ENCODE measurements at regions of chr10 and their contacts with region 1.

Region 1: GRCh38 chr10:86399879-86400704 is 33.5 kb upstream of the GRID1 start:
- DNase-seq: peak; percentile 87
- ATAC-seq: peak; percentile 87
- H3K4me3 Mint-ChIP-seq: peak overlapping the region; percentile 87
- H3K27ac Mint-ChIP-seq: peak overlapping the region; percentile 69
- H3K4me1 Mint-ChIP-seq: peaks cover 13% of the 10 kb centered on the region
- H3K27me3 Mint-ChIP-seq: peaks cover 5% of the 10 kb centered on the region
- CTCF ChIP-seq: no peak

Region 2: DNA sequence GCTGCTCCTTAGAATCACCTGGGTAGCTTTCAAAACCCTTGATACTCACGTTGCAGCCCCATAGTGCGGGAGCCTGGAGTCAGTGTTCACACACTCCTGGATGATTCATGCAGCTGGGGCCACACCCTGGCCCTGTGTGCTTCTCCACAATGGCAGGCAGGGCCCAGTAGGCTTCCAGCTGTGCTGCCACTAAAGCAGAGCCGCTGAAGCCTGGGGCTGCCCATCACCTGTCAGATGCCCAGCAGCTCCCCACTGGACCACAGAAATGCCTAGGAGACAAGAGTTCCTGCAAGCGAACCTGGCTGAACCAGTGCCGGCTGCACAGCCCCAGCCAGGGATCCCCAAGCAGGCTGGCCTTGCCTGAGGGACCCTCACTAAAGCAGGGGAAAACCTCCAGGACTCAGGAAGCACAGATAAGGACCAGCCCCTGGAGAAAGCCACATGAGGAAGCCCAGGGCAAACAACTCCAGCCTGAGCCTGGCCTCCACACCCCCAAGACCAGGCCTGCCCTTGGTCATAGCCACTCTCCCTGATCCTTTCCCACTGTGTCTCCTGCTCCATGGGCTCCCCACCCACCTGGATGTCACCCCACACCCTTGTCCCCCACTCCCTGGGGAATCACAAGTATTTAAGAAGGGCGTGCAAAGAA is 145.4 kb before region 1 on chr10:
- CTCF ChIA-PET with region 1: no interaction called
- POLR2A ChIA-PET with region 1: no interaction called
- intact Hi-C with region 1: no loop called
- DNase-seq: no peak
- ATAC-seq: no peak
- H3K4me3 Mint-ChIP-seq: no peak overlapping the region
- H3K27ac Mint-ChIP-seq: no peak overlapping the region
- H3K4me1 Mint-ChIP-seq: no peaks in the 10 kb centered on the region
- H3K27me3 Mint-ChIP-seq: peaks cover 11% of the 10 kb centered on the region
- CTCF ChIP-seq: no peak

Region 3: GRCh38 chr10:86371691-86372090 is 28.4 kb before region 1 on chr10:
- CTCF ChIA-PET with region 1: no interaction called
- POLR2A ChIA-PET with region 1: no interaction called
- intact Hi-C with region 1: no loop called
- DNase-seq: no peak
- ATAC-seq: no peak
- H3K4me3 Mint-ChIP-seq: no peak overlapping the region
- H3K27ac Mint-ChIP-seq: no peak overlapping the region
- H3K4me1 Mint-ChIP-seq: peaks cover 2% of the 10 kb centered on the region
- H3K27me3 Mint-ChIP-seq: peaks cover 58% of the 10 kb centered on the region
- CTCF ChIP-seq: no peak

Region 4: DNA sequence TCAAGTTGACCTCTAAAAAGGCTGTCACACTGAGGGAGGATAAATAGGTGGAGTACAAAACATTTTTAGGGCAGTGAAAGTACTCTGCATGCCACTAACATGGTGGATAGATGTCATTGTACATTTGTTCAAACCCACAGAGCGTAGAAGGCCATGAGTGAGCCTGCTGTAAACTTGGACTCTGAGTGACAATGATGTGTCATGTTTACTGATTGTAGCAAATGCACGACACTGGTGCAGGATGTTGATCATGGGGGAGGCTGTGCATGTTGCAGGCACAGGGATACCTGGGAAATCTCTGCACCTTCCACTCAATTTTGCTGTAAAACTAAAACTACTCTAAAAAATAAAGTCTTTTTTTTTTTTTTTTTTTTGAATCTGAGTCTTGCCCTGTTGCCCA is 19.0 kb after region 1 on chr10:
- CTCF ChIA-PET with region 1: interaction called, 14 read pairs
- POLR2A ChIA-PET with region 1: interaction called, 60 read pairs
- intact Hi-C with region 1: no loop called
- DNase-seq: no peak
- ATAC-seq: no peak
- H3K4me3 Mint-ChIP-seq: no peak overlapping the region
- H3K27ac Mint-ChIP-seq: no peak overlapping the region
- H3K4me1 Mint-ChIP-seq: peaks cover 12% of the 10 kb centered on the region
- H3K27me3 Mint-ChIP-seq: no peaks in the 10 kb centered on the region
- CTCF ChIP-seq: no peak

Region 5: DNA sequence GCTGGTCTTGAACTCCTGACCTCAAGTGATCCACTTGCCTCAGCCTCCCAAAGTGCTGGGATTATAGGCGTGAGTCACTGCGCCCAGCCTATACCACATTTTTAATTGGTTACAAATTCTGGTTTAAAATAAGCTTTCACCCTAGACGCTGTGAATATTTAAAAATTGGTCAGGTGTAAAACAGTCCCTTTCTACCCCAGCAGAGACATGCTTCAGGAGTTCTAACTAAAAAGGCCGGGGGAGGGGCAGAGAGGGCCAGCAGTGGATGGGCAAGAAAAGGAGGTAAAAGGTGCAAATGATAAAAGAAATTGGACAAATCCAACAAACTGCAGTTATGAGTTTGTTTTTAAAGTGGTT is 51.5 kb after region 1 on chr10:
- CTCF ChIA-PET with region 1: interaction called, 4 read pairs
- POLR2A ChIA-PET with region 1: no interaction called
- intact Hi-C with region 1: loop called (anchors 1 kb)
- DNase-seq: no peak
- ATAC-seq: peak; percentile 31
- H3K4me3 Mint-ChIP-seq: no peak overlapping the region
- H3K27ac Mint-ChIP-seq: no peak overlapping the region
- H3K4me1 Mint-ChIP-seq: peaks cover 41% of the 10 kb centered on the region
- H3K27me3 Mint-ChIP-seq: no peaks in the 10 kb centered on the region
- CTCF ChIP-seq: no peak

Region 6: GRCh38 chr10:86535057-86535882 is 135.2 kb after region 1 on chr10:
- CTCF ChIA-PET with region 1: interaction called, 3 read pairs
- POLR2A ChIA-PET with region 1: interaction called, 5 read pairs
- intact Hi-C with region 1: loop called (anchors 5 kb)
- DNase-seq: peak; percentile 41
- ATAC-seq: peak; percentile 85
- H3K4me3 Mint-ChIP-seq: peak overlapping the region; percentile 83
- H3K27ac Mint-ChIP-seq: peak overlapping the region; percentile 68
- H3K4me1 Mint-ChIP-seq: peaks cover 13% of the 10 kb centered on the region
- H3K27me3 Mint-ChIP-seq: peaks cover 3% of the 10 kb centered on the region
- CTCF ChIP-seq: no peak

Region 7: DNA sequence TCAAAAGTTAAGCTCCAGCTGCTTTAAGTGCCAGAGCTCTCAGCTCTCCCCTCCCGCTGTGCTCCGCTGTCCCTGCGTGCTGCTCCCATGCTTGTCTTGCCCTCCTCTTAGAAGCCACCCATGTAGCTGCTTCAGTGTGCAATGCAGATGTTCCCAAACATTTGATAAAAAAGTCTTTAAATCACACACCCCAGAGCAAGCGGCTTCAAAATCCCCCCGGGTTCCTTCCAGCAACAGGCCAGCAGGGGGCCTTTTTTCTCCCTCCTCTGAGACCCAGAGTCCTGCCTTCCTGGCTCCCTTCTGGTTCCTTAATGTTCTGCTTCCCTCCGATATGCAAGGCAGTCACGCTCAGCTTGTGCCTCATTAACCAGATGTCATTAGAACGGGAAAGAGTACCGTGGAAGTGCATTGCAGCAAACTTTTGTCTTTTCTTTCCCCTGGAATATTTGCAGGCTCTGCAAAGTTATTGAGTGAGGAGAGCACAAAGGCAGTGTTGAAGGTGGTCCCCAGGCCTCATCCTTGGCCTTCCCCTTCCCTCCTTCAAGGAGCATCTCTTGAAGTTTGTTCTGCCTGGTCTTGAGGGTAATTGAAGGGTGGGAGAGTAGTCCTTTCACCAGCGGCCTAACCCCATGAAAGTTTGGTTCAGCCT is 293.8 kb after region 1 on chr10:
- CTCF ChIA-PET with region 1: no interaction called
- POLR2A ChIA-PET with region 1: no interaction called
- intact Hi-C with region 1: loop called (anchors 5 kb)
- DNase-seq: no peak
- ATAC-seq: no peak
- H3K4me3 Mint-ChIP-seq: no peak overlapping the region
- H3K27ac Mint-ChIP-seq: no peak overlapping the region
- H3K4me1 Mint-ChIP-seq: no peaks in the 10 kb centered on the region
- H3K27me3 Mint-ChIP-seq: no peaks in the 10 kb centered on the region
- CTCF ChIP-seq: no peak

Measured in activated B cell treated with CpG ODN at 0.5 μM for 24 hours (primary cell).